ENCODE measurements at regions of chr16 and their contacts with region 1.

Region 1: DNA sequence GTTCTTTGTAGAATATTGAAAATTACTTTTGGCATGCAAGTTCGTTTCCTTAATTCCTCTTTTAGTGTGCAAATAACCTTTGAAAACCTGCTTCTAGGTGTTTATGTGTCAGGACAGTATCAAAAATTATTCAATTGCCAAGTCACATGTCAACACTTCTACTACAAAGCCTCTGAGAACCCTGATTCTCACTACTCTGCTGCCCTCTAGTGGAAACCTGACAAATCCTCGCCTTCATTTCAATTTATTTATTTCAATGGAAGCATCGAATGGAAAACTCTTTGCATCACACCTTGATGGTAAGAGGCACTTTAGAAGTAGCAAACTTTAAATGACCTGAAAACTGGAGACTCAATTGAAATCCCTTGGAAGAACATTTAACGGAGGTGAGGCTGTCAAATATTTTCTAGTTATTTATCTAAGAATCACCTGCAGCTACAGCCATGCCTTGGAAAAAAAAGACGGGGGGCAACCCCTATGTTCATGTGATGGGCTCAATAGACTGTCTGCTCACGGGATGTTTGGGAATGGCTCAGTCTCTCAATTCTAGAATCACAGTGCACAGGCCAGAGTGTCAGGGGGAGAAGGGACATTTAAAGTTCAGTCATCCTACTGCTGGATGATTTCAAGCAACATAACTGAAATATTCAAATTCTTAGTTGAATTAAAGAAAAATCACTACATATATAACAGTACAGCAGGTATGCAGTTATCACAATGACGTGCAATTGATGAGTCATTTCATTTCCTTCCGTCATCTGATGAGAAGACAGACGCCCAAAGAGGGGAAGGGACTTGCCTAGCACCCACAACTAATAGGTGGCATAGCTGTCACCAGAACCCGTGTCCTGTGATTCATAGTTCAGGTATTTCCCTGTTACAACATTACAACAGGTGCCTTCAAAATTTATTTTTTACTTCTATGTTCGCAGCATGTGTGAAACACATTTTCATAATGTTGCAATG is 563.9 kb downstream of the TOX3 start:
- DNase-seq: peak; percentile 82

Region 2: GRCh38 chr16:51818342-51818944 is 164.6 kb before region 1 on chr16:
- in situ Hi-C with region 1: loop called (anchors 25 kb)
- DNase-seq: peak; percentile 69

Region 3: DNA sequence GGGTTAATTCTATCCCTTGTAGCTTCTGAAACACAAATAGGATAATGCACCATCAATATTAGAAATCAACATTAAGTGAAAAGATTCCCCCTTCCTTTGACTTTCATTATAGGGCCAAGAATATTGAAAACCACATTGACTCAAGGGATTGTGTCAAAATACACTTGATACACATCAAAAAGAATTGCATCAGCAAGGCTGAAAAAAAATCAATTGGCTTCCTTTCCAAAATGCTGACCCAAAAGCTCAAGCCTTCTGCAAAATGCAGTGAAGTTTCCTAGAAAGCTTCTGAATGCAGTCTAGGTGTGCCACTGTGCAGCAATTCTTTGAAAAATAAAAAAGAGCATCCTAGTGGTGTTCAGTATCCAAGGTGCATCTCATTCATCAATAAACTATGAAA is 110.5 kb before region 1 on chr16:
- in situ Hi-C with region 1: no loop called
- DNase-seq: no peak

Region 4: DNA sequence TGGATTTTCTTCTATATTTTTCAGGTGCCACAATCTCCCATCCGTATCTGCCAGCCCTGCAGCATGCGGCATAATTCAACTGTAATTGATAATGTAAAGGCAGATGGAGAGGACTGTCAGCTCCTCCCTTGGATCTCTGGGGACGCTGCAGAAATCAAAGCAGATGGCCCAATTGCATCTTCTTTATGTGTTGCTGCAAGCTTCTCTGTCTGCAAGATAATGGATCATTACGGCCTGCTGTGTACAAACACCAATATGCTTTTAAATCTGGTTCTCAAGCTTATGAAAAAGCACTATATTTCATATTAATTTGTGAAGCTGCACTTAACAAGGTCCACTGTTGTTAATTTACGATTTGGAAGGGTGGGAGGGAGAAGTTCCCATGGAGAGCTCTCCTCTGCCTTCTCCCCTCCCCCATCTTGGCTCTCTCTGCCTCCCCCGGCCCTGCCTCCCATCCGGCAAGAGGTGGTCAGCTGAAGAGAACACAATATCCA is 43.6 kb before region 1 on chr16:
- in situ Hi-C with region 1: no loop called
- DNase-seq: no peak